BJ (cell line): ENCODE measurements at regions of chr14 and their contacts with region 1.

Region 1: GRCh38 chr14:99628832-99629618 is 15.9 kb upstream of the HHIPL1 start:
- DNase-seq: no peak
- H3K4me3 ChIP-seq: no peak overlapping the region
- H3K27me3 ChIP-seq: no peaks in the 10 kb centered on the region; the same call in 1 of the 2 replicates
- CTCF ChIP-seq: peak; percentile 99

Region 2: GRCh38 chr14:99511421-99512109 is 117.5 kb before region 1 on chr14:
- CTCF ChIA-PET with region 1: interaction called, 12 read pairs
- POLR2A ChIA-PET with region 1: no interaction called
- DNase-seq: no peak
- H3K4me3 ChIP-seq: no peak overlapping the region
- H3K27me3 ChIP-seq: no peaks in the 10 kb centered on the region
- CTCF ChIP-seq: no peak

Region 3: GRCh38 chr14:99518441-99519346 is 110.3 kb before region 1 on chr14:
- CTCF ChIA-PET with region 1: interaction called, 49 read pairs
- POLR2A ChIA-PET with region 1: no interaction called
- DNase-seq: no peak
- H3K4me3 ChIP-seq: no peak overlapping the region
- H3K27me3 ChIP-seq: no peaks in the 10 kb centered on the region
- CTCF ChIP-seq: peak; percentile 97

Region 4: GRCh38 chr14:99524804-99525698 is 104.0 kb before region 1 on chr14:
- CTCF ChIA-PET with region 1: interaction called, 49 read pairs
- POLR2A ChIA-PET with region 1: no interaction called
- DNase-seq: no peak
- H3K4me3 ChIP-seq: no peak overlapping the region
- H3K27me3 ChIP-seq: no peaks in the 10 kb centered on the region
- CTCF ChIP-seq: peak; percentile 59